Mammary epithelial cell (primary cell): ENCODE measurements at regions of chr1 and their contacts with region 1.

Region 1: DNA sequence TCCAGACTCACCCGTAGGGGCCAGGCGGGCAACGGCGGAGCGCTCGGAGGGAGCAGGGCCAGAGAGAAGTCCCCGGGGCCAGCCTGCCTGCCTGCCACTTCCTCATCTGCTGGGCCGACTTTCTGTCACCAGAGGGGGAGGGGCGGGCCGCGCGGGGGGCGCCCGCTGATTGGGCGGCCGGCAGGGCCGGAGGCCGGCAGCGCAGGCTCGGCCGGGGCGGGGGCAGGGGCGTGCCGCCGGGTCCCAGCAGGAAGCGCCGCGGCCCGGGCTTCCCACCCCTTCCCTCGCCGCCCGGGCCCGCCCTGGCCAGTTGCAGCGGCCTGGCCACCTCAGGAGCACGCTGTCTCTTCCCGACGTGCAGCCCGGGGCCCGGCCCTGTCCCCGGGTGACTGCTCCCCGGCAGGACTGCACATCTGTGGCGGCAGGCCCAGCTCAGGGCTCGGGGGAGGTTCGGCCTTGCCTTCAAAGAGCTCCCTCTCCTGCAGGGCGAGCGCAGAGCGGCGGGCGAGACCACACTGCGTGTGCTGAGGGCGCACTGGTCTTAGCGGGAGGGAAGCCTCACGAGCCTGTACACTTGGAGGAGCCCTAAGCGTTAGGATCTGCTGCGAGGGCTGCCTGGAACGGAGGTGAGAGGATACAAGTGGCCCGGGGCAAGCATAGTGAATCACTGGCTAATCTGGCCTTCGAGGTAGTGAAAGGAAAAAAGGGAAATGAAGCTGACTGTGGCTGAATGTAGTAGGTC is at the start of gene ELOVL1:
- DNase-seq: peak; percentile 84
- H3K4me3 ChIP-seq: peak within 1 kb of the TSS; percentile 76 to 81 (median 80)
- H3K27ac ChIP-seq: peak within 1 kb of the TSS; percentile 65
- H3K4me1 ChIP-seq: peaks cover 36% of the 10 kb centered on the region
- H3K27me3 ChIP-seq: no peaks in the 10 kb centered on the region
- CTCF ChIP-seq: peak in 1 of 2 donors; percentile 48
- total RNA-seq, gene ELOVL1: 34.7 to 137 TPM

Region 2: DNA sequence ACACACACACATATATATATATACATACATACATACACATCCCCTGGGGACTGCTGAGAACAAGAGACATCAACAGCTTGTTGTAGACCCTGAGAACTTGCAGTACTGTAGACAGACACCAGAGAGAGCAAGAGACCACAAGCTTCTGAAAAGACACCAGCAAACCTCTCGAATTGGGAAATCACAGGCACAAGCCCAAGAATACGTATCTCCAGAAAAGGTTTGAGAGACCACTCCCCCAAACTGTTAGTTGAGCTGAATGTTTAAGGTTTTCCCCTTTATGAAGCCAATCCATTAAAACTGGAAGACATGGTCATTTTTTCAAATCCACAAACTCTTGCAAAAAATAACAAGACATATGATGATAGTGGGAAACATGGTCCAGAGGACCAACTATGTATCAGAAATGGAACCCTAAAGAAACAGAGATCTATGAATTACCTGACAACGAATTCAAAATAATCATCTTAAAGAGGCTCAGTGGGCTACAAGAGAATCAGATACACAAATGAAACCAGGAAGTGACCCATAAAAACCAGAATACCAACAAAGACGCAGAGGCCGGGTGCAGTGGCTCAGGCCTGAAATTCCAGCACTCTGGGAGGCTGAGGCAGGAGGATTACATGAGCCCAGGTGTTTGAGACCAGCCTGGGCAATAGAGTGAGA is 454.5 kb before region 1 on chr1:
- CTCF ChIA-PET with region 1: no interaction called
- dilution Hi-C with region 1: no loop called
- in situ Hi-C with region 1: no loop called
- intact Hi-C with region 1: loop called (anchors 10 kb)
- DNase-seq: peak; percentile 63
- H3K4me3 ChIP-seq: no peak overlapping the region
- H3K27ac ChIP-seq: no peak overlapping the region
- H3K4me1 ChIP-seq: no peaks in the 10 kb centered on the region
- H3K27me3 ChIP-seq: no peaks in the 10 kb centered on the region
- CTCF ChIP-seq: peak; percentile 76 to 79

Region 3: DNA sequence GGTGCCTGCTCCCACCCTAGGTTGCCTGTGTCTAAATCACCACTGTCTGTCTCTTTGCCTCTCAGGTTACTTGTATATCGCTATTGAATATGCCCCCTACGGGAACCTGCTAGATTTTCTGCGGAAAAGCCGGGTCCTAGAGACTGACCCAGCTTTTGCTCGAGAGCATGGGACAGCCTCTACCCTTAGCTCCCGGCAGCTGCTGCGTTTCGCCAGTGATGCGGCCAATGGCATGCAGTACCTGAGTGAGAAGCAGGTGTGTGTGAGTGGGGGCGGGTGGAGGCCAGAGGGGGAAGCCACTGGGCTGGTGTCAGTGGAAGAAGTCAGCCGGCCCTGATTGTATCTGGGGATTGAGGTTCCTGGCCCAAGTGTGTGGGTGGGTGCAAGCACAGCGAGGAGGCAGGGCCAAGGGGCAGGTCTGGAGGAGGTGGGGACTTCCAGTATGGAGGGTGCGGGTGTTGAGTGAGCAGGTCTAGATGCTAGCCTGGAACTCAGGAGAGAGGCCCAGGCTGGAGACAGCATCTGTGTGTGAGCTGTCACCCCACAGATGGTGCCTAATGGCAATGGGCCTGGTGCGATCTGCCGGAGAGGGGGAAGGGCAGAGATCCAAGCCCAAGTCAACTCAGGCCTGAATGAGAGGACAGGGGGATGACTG is 50.1 kb before region 1 on chr1:
- CTCF ChIA-PET with region 1: no interaction called
- dilution Hi-C with region 1: no loop called
- in situ Hi-C with region 1: no loop called
- intact Hi-C with region 1: no loop called
- DNase-seq: no peak
- H3K4me3 ChIP-seq: no peak overlapping the region
- H3K27ac ChIP-seq: no peak overlapping the region
- H3K4me1 ChIP-seq: no peaks in the 10 kb centered on the region
- H3K27me3 ChIP-seq: no peaks in the 10 kb centered on the region
- CTCF ChIP-seq: no peak

Region 4: GRCh38 chr1:43414634-43415223 is 46.7 kb after region 1 on chr1:
- CTCF ChIA-PET with region 1: no interaction called
- dilution Hi-C with region 1: no loop called
- in situ Hi-C with region 1: no loop called
- intact Hi-C with region 1: loop called (anchors 1 kb)
- DNase-seq: peak; percentile 24
- H3K4me3 ChIP-seq: no peak overlapping the region
- H3K27ac ChIP-seq: no peak overlapping the region
- H3K4me1 ChIP-seq: no peaks in the 10 kb centered on the region
- H3K27me3 ChIP-seq: no peaks in the 10 kb centered on the region
- CTCF ChIP-seq: peak; percentile 42 to 53